Pancreas (tissue), 10 donors: ENCODE measurements at regions of chr7 and their contacts with region 1.

Region 1: GRCh38 chr7:37211097-37211880 is 237.4 kb downstream of the ELMO1 start:
- DNase-seq: no peak
- ATAC-seq: peak; percentile 45 to 75 (median 48)
- H3K4me3 ChIP-seq: no peak overlapping the region
- H3K27ac ChIP-seq: no peak overlapping the region
- H3K4me1 ChIP-seq: peaks cover 0 to 9% (median 5%) of the 10 kb centered on the region in 3 donors
- H3K27me3 ChIP-seq: no peaks in the 10 kb centered on the region
- CTCF ChIP-seq: no peak

Region 2: GRCh38 chr7:37510043-37510634 is 298.9 kb after region 1 on chr7:
- intact Hi-C with region 1: loop called in 1 of 3 experiments (anchors 10 kb)
- DNase-seq: no peak
- ATAC-seq: peak in 3 of 4 donors; percentile 35 to 59 (median 52)
- H3K4me3 ChIP-seq: no peak overlapping the region
- H3K27ac ChIP-seq: no peak overlapping the region
- H3K4me1 ChIP-seq: no peaks in the 10 kb centered on the region
- H3K27me3 ChIP-seq: no peaks in the 10 kb centered on the region
- CTCF ChIP-seq: peak; percentile 33 to 61 (median 54)